ENCODE measurements at regions of chr14 and their contacts with region 1.

Region 1: GRCh38 chr14:94439453-94440057 is 13.0 kb downstream of the SERPINA11 start:
- DNase-seq: no peak
- H3K4me3 Mint-ChIP-seq: no peak overlapping the region
- H3K27ac Mint-ChIP-seq: no peak overlapping the region
- H3K4me1 Mint-ChIP-seq: no peaks in the 10 kb centered on the region
- H3K27me3 Mint-ChIP-seq: peaks cover 7% of the 10 kb centered on the region

Region 2: DNA sequence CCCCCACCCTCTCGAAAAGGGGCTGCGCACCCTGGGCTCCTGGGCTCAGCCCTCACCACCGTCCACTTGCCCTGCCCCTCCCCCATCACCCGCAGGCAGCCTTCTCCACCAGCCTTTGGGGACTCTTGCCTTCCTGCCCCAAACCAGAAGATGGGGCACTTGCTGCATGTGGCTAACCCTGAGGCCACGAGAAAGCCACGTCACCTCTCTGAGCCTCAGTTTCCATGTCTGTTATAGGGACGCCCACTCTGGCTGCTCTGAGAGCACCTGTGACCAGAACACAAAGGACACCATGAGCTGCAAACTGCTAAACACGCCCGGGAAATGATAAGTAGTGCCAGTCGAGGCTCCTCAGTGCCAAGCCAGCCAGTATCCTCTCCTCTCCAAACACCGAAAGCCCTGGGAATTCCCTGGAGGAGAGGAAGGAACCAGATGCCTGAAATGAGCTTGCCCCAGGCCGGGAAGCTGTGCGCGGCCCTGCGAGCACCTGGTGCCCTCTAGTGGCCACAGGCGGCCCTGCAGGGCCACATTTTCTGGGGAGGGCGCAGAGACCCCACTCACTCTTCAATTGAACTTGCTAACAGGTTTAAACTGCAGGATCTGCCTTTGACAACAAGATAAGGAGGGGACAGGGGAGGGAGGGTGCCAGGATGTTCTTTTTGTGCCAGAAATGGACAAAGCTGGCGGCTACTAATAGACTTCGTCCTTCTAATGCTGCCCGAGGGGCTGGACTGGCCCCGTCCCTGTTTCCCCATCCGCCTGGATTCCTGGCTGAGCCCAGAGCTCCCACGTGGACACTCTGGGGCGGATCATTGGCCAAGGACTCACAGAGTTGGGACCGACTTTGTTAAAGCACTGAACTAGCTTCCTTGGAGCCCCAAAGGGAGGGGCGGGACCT is 46.6 kb after region 1 on chr14:
- intact Hi-C with region 1: loop called (anchors 1 kb)
- DNase-seq: peak; percentile 21
- H3K4me3 Mint-ChIP-seq: no peak overlapping the region
- H3K27ac Mint-ChIP-seq: no peak overlapping the region
- H3K4me1 Mint-ChIP-seq: no peaks in the 10 kb centered on the region
- H3K27me3 Mint-ChIP-seq: peaks cover 11% of the 10 kb centered on the region

Region 3: GRCh38 chr14:94548999-94549985 is 109.7 kb after region 1 on chr14:
- intact Hi-C with region 1: loop called (anchors 2 kb)
- DNase-seq: peak; percentile 24
- H3K4me3 Mint-ChIP-seq: no peak overlapping the region
- H3K27ac Mint-ChIP-seq: no peak overlapping the region
- H3K4me1 Mint-ChIP-seq: no peaks in the 10 kb centered on the region
- H3K27me3 Mint-ChIP-seq: peaks cover 11% of the 10 kb centered on the region

Region 4: DNA sequence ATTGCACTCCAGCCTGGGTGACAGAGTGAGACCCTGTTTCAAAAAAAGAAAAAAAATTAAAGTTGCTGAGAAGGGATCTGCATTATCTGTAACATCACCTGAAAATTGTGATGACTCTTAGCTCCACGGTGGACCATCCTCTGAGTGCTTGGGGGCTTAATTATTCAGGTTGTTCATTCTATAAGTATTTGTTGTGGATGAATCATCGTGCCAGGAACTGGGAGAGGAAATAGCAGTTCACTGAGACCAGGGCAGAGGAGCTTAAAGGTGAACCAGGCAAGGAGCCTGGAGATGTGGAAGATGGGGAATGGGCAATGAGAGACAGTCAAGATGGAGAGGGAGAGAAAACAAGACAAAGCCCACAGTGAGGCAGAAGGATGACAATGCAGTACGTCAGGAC is 355.8 kb after region 1 on chr14:
- intact Hi-C with region 1: no loop called
- DNase-seq: no peak
- H3K4me3 Mint-ChIP-seq: no peak overlapping the region
- H3K27ac Mint-ChIP-seq: no peak overlapping the region
- H3K4me1 Mint-ChIP-seq: no peaks in the 10 kb centered on the region
- H3K27me3 Mint-ChIP-seq: no peaks in the 10 kb centered on the region